ENCODE measurements at regions of chr9 and their contacts with region 1.

Region 1: GRCh38 chr9:85024374-85024773 is 354.8 kb downstream of the NTRK2 start:
- DNase-seq: no peak
- ATAC-seq: no peak
- H3K4me3 ChIP-seq: no peak overlapping the region
- H3K27ac ChIP-seq: no peak overlapping the region
- H3K4me1 ChIP-seq: no peaks in the 10 kb centered on the region
- H3K27me3 ChIP-seq: no peaks in the 10 kb centered on the region
- CTCF ChIP-seq: no peak

Region 2: DNA sequence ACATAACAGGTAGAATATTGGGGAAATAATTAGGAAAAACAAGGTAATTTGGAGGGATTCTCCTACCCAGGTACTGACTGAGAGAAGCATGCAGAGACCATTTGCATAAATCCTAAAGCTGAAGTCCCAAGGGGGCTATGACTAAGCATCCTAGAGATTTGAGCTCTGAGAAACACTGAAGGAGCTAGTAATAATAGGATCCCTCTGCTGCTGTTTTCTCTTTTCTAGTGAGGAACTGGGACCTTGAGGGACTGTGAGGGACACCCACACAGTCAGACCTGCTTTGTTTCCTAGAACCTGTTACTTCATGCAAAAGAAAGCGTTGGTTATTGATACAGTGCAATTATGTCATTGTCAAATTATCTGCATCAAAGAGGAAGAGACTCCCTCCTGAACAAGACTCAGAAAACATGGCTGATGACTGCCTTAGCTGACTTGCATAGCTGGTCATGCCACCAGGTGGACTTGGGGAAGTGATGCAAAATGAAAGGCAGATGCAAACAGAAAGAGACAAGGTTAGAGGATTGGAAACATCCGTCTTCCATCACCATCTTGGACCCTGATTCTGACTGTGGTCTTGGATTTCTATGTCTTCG is 19.5 kb before region 1 on chr9:
- CTCF ChIA-PET with region 1: no interaction called
- POLR2A ChIA-PET with region 1: no interaction called
- in situ Hi-C with region 1: no loop called
- intact Hi-C with region 1: no loop called
- DNase-seq: no peak
- ATAC-seq: no peak
- H3K4me3 ChIP-seq: no peak overlapping the region
- H3K27ac ChIP-seq: no peak overlapping the region
- H3K4me1 ChIP-seq: no peaks in the 10 kb centered on the region
- H3K27me3 ChIP-seq: no peaks in the 10 kb centered on the region
- CTCF ChIP-seq: no peak

Region 3: DNA sequence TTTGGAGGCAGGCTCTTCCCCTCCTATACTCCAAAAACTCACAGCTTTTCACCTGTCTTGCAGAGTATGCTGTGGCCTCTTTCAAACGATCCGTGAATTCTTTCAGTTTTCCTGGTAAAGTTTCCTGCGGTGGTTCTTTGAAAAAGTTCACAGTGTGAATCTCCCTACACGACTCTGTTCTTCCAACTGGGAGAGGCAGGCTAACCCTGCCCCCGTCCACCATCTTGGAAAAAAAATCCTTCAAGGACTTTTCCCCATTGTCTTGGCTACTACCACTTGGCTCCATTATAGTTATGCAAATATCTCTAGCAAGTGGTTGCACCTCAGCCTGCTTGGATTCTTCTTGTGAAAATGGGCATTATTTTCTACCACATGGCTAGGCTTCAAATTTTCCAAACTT is 334.8 kb after region 1 on chr9:
- CTCF ChIA-PET with region 1: interaction called, 11 read pairs
- POLR2A ChIA-PET with region 1: no interaction called
- in situ Hi-C with region 1: no loop called
- intact Hi-C with region 1: no loop called
- DNase-seq: no peak
- ATAC-seq: no peak
- H3K4me3 ChIP-seq: no peak overlapping the region
- H3K27ac ChIP-seq: no peak overlapping the region
- H3K4me1 ChIP-seq: no peaks in the 10 kb centered on the region
- H3K27me3 ChIP-seq: no peaks in the 10 kb centered on the region
- CTCF ChIP-seq: no peak